Activated CD4-positive, alpha-beta T cell treated with anti-CD3 and anti-CD28 coated beads for 36 hours (primary cell): ENCODE measurements at regions of chr11 and their contacts with region 1.

Region 1: GRCh38 chr11:8033305-8034105 is 46.4 kb downstream of the EIF3F start:
- DNase-seq: peak; percentile 73
- ATAC-seq: peak; percentile 80
- H3K4me3 Mint-ChIP-seq: no peak overlapping the region
- H3K27ac Mint-ChIP-seq: no peak overlapping the region
- H3K4me1 Mint-ChIP-seq: peaks cover 2% of the 10 kb centered on the region
- H3K27me3 Mint-ChIP-seq: peaks cover 20% of the 10 kb centered on the region

Region 2: DNA sequence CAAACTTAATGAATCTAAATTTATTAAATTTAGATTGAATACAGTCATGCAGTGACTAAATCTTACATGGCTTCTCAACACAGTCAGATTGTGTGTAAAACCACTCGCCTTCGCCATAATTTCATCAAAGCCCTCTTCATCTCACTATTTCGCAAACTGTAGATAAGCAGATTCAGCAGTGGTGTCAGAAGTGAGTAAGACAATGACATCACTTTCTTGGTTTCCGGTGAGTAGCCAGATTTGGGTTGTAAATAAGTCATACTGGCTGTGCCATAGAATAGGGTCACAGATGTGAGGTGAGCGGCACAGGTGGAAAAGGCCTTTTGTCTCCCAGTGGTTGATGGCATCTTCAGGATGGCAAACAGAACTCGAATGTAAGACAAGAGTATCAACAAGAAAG is 105.9 kb before region 1 on chr11:
- CTCF ChIA-PET with region 1: no interaction called
- POLR2A ChIA-PET with region 1: no interaction called
- intact Hi-C with region 1: no loop called
- DNase-seq: peak; percentile 8
- ATAC-seq: peak; percentile 44
- H3K4me3 Mint-ChIP-seq: no peak overlapping the region
- H3K27ac Mint-ChIP-seq: no peak overlapping the region
- H3K4me1 Mint-ChIP-seq: no peaks in the 10 kb centered on the region
- H3K27me3 Mint-ChIP-seq: peaks cover 27% of the 10 kb centered on the region

Region 3: GRCh38 chr11:8018484-8019313 is 14.8 kb before region 1 on chr11:
- CTCF ChIA-PET with region 1: interaction called, 20 read pairs
- POLR2A ChIA-PET with region 1: no interaction called
- intact Hi-C with region 1: no loop called
- DNase-seq: peak; percentile 67
- ATAC-seq: peak; percentile 57
- H3K4me3 Mint-ChIP-seq: peak overlapping the region; percentile 56
- H3K27ac Mint-ChIP-seq: no peak overlapping the region
- H3K4me1 Mint-ChIP-seq: peaks cover 10% of the 10 kb centered on the region
- H3K27me3 Mint-ChIP-seq: peaks cover 30% of the 10 kb centered on the region

Region 4: GRCh38 chr11:8056810-8057463 is 23.4 kb after region 1 on chr11:
- CTCF ChIA-PET with region 1: interaction called, 10 read pairs
- POLR2A ChIA-PET with region 1: no interaction called
- intact Hi-C with region 1: no loop called
- DNase-seq: no peak
- ATAC-seq: no peak
- H3K4me3 Mint-ChIP-seq: no peak overlapping the region
- H3K27ac Mint-ChIP-seq: no peak overlapping the region
- H3K4me1 Mint-ChIP-seq: no peaks in the 10 kb centered on the region
- H3K27me3 Mint-ChIP-seq: peaks cover 2% of the 10 kb centered on the region

Region 5: GRCh38 chr11:8070417-8071115 is 37.1 kb after region 1 on chr11:
- CTCF ChIA-PET with region 1: interaction called, 7 read pairs
- POLR2A ChIA-PET with region 1: no interaction called
- intact Hi-C with region 1: loop called (anchors 1 to 5 kb)
- DNase-seq: no peak
- ATAC-seq: peak; percentile 70
- H3K4me3 Mint-ChIP-seq: no peak overlapping the region
- H3K27ac Mint-ChIP-seq: no peak overlapping the region
- H3K4me1 Mint-ChIP-seq: peaks cover 4% of the 10 kb centered on the region
- H3K27me3 Mint-ChIP-seq: peaks cover 17% of the 10 kb centered on the region

Region 6: DNA sequence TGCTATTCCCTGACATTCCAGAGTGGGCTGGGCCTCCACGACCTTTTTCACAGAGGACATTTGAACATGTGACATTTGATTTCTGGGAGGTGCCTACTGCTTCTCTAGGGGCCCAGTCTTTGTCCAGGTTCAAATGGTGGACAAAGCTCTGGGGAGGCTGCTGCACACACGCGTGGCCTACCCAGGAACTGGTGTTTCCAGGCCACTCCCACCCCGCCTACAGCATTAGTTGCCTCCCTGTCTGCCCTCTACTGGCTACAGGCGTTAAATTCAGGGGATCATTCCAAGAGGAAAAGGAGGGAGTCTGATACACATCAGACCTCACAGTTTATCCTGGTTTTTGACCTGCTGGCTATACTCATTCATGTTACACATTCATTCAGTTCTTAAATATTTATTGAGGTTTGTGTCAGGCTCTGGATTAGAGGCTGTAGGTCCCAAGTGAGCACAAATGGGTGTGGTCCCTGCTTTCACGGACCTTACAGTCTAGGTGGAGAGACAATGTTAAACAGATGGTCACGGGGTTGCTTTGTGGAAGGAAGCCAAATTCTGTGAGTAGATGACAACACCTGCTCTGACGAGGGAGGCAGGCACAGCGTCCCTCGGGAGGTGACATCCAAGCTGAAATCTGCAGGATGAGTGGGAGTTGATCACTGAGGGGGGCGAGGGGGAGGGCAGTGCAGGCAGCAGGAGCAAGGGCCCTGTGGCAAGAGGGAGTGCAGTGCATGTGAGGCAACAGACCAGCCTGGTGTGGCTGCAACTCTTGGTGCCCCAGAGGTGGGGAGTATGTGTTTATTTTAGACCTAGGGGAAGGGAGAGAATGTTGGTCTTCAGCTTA is 59.3 kb after region 1 on chr11:
- CTCF ChIA-PET with region 1: interaction called, 86 read pairs
- POLR2A ChIA-PET with region 1: no interaction called
- intact Hi-C with region 1: loop called (anchors 1 to 2 kb)
- DNase-seq: peak; percentile 75
- ATAC-seq: peak; percentile 87
- H3K4me3 Mint-ChIP-seq: no peak overlapping the region
- H3K27ac Mint-ChIP-seq: no peak overlapping the region
- H3K4me1 Mint-ChIP-seq: no peaks in the 10 kb centered on the region
- H3K27me3 Mint-ChIP-seq: no peaks in the 10 kb centered on the region

Region 7: GRCh38 chr11:8403310-8403709 is 369.8 kb after region 1 on chr11:
- CTCF ChIA-PET with region 1: no interaction called
- POLR2A ChIA-PET with region 1: no interaction called
- intact Hi-C with region 1: no loop called
- DNase-seq: no peak
- ATAC-seq: no peak
- H3K4me3 Mint-ChIP-seq: no peak overlapping the region
- H3K27ac Mint-ChIP-seq: no peak overlapping the region
- H3K4me1 Mint-ChIP-seq: no peaks in the 10 kb centered on the region
- H3K27me3 Mint-ChIP-seq: peaks cover 9% of the 10 kb centered on the region